CD4-positive, alpha-beta T cell (primary cell): ENCODE measurements at regions of chr6 and their contacts with region 1.

Region 1: GRCh38 chr6:36885461-36886401 is at the start of gene C6orf89:
- DNase-seq: peak; percentile 92 to 99 (median 97)
- ATAC-seq: peak; percentile 98
- H3K4me3 ChIP-seq: peak within 1 kb of the TSS; percentile 79
- H3K4me3 Mint-ChIP-seq: peak within 1 kb of the TSS; percentile 82
- H3K27ac ChIP-seq: peak within 1 kb of the TSS; percentile 73 to 83
- H3K27ac Mint-ChIP-seq: peak within 1 kb of the TSS; percentile 90
- H3K4me1 ChIP-seq: peaks cover 19% of the 10 kb centered on the region
- H3K4me1 Mint-ChIP-seq: peaks cover 41% of the 10 kb centered on the region
- H3K27me3 ChIP-seq: no peaks in the 10 kb centered on the region
- H3K27me3 Mint-ChIP-seq: no peaks in the 10 kb centered on the region
- CTCF ChIP-seq: peak; percentile 79
- total RNA-seq, gene C6orf89: 23.7 to 24.0 TPM

Region 2: GRCh38 chr6:36874443-36875249 is 11.1 kb before region 1 on chr6 and contains the start of gene PPIL1:
- CTCF ChIA-PET with region 1: interaction called, 56 read pairs
- POLR2A ChIA-PET with region 1: interaction called, 54 read pairs
- intact Hi-C with region 1: loop called (anchors 1 kb)
- DNase-seq: peak; percentile 71 to 94 (median 82)
- ATAC-seq: peak; percentile 91
- H3K4me3 ChIP-seq: peak within 1 kb of the TSS; percentile 69
- H3K4me3 Mint-ChIP-seq: peak within 1 kb of the TSS; percentile 95
- H3K27ac ChIP-seq: peak within 1 kb of the TSS; percentile 80 to 82
- H3K27ac Mint-ChIP-seq: peak within 1 kb of the TSS; percentile 95
- H3K4me1 ChIP-seq: peaks cover 14% of the 10 kb centered on the region
- H3K4me1 Mint-ChIP-seq: peaks cover 45% of the 10 kb centered on the region
- H3K27me3 ChIP-seq: peaks cover 0 to 5% of the 10 kb centered on the region in 2 experiments
- H3K27me3 Mint-ChIP-seq: peaks cover 17% of the 10 kb centered on the region
- CTCF ChIP-seq: no peak
- total RNA-seq, gene PPIL1: 1.8 to 2.2 TPM

Region 3: GRCh38 chr6:36962874-36963273 is 77.1 kb after region 1 on chr6:
- CTCF ChIA-PET with region 1: interaction called, 7 read pairs
- POLR2A ChIA-PET with region 1: interaction called, 3 read pairs
- intact Hi-C with region 1: loop called in 1 of 2 experiments (anchors 5 kb)
- DNase-seq: peak; percentile 67 to 93 (median 76)
- ATAC-seq: peak; percentile 81
- H3K4me3 ChIP-seq: no peak overlapping the region
- H3K4me3 Mint-ChIP-seq: peak overlapping the region; percentile 75
- H3K27ac ChIP-seq: peak overlapping the region in 1 of 2 donors; percentile 72
- H3K27ac Mint-ChIP-seq: peak overlapping the region; percentile 86
- H3K4me1 ChIP-seq: peaks cover 39% of the 10 kb centered on the region
- H3K4me1 Mint-ChIP-seq: peaks cover 50% of the 10 kb centered on the region
- H3K27me3 ChIP-seq: no peaks in the 10 kb centered on the region
- H3K27me3 Mint-ChIP-seq: no peaks in the 10 kb centered on the region
- CTCF ChIP-seq: no peak

Region 4: DNA sequence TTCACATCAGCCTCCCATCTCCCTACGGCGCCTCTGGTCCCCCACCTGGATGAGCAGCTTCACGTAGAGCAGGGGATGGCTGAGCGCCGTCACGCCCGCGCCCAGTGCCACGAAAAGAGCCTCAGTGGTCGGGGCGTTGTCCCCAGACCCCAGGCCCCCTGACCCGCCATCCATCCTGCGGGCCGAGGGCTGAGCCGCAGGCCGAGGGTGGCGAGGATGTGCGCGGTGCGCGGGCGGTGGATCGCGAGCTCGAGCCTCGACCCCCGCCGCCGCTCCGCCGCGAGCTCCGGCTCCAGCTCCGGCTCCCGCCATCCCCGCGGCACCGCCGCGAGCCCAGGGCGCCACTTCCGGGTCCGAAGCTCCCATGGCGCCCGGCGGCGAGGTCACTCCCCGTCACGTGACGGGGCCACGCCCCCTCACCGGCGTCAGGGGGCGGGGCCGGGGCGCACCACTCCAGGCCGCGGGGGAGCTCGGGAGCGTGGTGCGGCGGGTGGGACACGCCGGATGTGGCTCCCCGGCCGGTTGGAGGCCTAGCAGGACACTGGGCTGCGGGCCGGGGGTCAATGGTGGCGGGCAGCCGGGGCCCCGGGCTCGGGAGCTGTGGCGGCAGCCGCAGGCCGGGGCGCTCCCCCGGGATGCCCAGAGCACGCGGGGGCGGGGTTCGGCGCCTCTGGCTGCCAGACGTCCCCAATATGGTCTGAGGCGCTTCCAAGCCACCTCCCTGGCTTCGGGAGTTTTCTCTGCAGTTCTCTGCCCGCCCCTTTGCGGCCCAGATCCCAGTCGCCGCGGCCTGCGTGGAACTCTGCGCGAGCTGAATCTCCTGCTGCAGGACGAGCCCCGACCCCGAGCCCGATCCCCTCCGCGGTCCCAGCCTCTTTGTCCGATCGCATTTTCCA is 100.3 kb after region 1 on chr6 and contains the start of gene MTCH1:
- CTCF ChIA-PET with region 1: interaction called, 9 read pairs
- POLR2A ChIA-PET with region 1: interaction called, 35 read pairs
- intact Hi-C with region 1: loop called in 1 of 2 experiments (anchors 1 kb)
- DNase-seq: peak; percentile 73 to 96 (median 86)
- ATAC-seq: peak; percentile 85
- H3K4me3 ChIP-seq: peak within 1 kb of the TSS; percentile 90
- H3K4me3 Mint-ChIP-seq: peak within 1 kb of the TSS; percentile 99
- H3K27ac ChIP-seq: peak within 1 kb of the TSS; percentile 61 to 81
- H3K27ac Mint-ChIP-seq: no peak within 1 kb of the TSS
- H3K4me1 ChIP-seq: peaks cover 49% of the 10 kb centered on the region
- H3K4me1 Mint-ChIP-seq: peaks cover 23% of the 10 kb centered on the region
- H3K27me3 ChIP-seq: no peaks in the 10 kb centered on the region
- H3K27me3 Mint-ChIP-seq: no peaks in the 10 kb centered on the region
- CTCF ChIP-seq: no peak
- total RNA-seq, gene MTCH1: 231 to 239 TPM

Region 5: DNA sequence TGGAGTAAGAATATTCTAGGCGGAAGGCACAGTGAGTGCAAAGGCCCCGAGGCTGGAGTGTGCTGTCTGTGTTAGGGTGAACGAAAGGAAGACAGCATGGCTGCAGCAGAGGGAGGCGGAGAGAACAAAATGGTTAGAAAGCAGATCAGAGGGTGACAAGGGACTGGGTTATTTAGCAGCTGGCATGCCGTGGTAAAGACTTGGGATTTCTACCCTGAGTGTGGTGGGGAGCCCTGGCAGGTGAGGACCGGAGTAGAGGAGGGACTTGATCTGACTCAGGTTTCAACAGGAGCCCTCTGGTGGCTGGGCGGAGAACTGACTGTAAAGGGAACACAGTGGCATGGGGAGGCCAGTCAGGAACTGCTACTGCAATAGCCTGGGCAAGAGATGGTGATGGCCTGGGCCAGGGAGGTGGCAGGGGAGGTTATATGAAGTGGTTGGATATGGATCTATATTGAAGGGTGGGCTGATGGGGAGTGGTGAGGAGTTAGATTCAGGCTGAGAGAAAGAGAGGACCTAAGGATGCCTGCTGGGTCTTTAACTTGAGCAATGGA is 322.2 kb after region 1 on chr6:
- CTCF ChIA-PET with region 1: interaction called, 12 read pairs
- POLR2A ChIA-PET with region 1: no interaction called
- intact Hi-C with region 1: loop called (anchors 1 kb)
- DNase-seq: peak; percentile 83 to 93 (median 89)
- ATAC-seq: peak; percentile 73
- H3K4me3 ChIP-seq: no peak overlapping the region
- H3K4me3 Mint-ChIP-seq: peak overlapping the region; percentile 26
- H3K27ac ChIP-seq: no peak overlapping the region
- H3K27ac Mint-ChIP-seq: peak overlapping the region; percentile 58
- H3K4me1 ChIP-seq: peaks cover 56% of the 10 kb centered on the region
- H3K4me1 Mint-ChIP-seq: peaks cover 50% of the 10 kb centered on the region
- H3K27me3 ChIP-seq: no peaks in the 10 kb centered on the region
- H3K27me3 Mint-ChIP-seq: no peaks in the 10 kb centered on the region
- CTCF ChIP-seq: peak; percentile 86